ENCODE measurements at regions of chr11 and their contacts with region 1.

Region 1: DNA sequence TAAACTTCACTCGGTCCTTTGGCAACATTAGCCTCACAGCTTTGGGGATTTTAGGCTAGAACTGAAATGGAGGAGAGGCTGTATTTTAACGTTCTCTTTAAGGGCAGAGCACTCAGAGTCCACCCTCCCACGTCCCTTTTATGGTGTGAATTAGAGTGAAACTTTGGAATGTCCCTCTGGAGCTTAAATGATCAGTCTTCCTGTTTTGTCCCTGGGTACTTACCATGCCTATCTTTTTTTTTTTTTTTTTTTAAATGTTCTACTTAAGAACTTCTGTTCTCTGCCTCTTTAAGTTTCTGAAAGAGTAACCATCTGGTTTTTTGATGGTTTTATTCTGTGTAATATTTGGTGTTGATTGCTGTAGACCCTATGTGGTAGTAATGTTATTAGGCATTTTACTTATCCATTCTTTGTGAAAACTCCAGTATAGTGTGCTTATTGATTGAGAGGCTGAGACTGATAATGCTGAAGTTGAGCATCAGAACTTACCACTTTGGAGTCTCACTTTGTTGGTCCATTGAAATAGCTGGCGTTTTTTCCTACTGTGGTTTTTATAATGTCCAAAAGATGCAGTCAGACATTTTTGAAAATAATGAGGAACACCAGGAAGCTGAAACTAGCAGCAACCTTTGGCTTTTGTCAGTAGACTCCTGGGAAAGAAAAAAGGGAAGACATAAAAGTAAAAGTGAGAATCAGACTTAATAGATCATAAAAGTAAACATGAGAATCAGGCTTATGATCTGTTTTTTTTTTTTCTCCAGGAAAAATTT is 11.6 kb downstream of the UVRAG start:
- DNase-seq: peak; percentile 41
- ATAC-seq: no peak
- H3K4me3 ChIP-seq: peak overlapping the region in 1 of 5 experiments; percentile 26
- H3K4me3 Mint-ChIP-seq: peak overlapping the region; percentile 52
- H3K27ac ChIP-seq: peak overlapping the region; percentile 79 to 85
- H3K27ac Mint-ChIP-seq: peak overlapping the region; percentile 92
- H3K4me1 ChIP-seq: peaks cover 76 to 81% of the 10 kb centered on the region in 2 donors
- H3K4me1 Mint-ChIP-seq: peaks cover 80% of the 10 kb centered on the region
- H3K27me3 ChIP-seq: no peaks in the 10 kb centered on the region
- H3K27me3 Mint-ChIP-seq: no peaks in the 10 kb centered on the region
- CTCF ChIP-seq: no peak

Region 2: GRCh38 chr11:75814686-75815344 is 11.8 kb before region 1 on chr11 and contains the start of gene UVRAG:
- CTCF ChIA-PET with region 1: interaction called, 5 read pairs
- POLR2A ChIA-PET with region 1: interaction called, 20 read pairs
- intact Hi-C with region 1: loop called (anchors 1 kb)
- DNase-seq: peak; percentile 100
- ATAC-seq: peak; percentile 84
- H3K4me3 ChIP-seq: peak within 1 kb of the TSS; percentile 80 to 98 (median 95)
- H3K4me3 Mint-ChIP-seq: no peak within 1 kb of the TSS
- H3K27ac ChIP-seq: peak within 1 kb of the TSS; percentile 93 to 97
- H3K27ac Mint-ChIP-seq: peak within 1 kb of the TSS; percentile 99
- H3K4me1 ChIP-seq: peaks cover 37 to 63% of the 10 kb centered on the region in 2 donors
- H3K4me1 Mint-ChIP-seq: peaks cover 48% of the 10 kb centered on the region
- H3K27me3 ChIP-seq: no peaks in the 10 kb centered on the region
- H3K27me3 Mint-ChIP-seq: no peaks in the 10 kb centered on the region
- CTCF ChIP-seq: no peak
- total RNA-seq, gene UVRAG: 94.1 and 115 TPM in 2 replicates

Region 3: DNA sequence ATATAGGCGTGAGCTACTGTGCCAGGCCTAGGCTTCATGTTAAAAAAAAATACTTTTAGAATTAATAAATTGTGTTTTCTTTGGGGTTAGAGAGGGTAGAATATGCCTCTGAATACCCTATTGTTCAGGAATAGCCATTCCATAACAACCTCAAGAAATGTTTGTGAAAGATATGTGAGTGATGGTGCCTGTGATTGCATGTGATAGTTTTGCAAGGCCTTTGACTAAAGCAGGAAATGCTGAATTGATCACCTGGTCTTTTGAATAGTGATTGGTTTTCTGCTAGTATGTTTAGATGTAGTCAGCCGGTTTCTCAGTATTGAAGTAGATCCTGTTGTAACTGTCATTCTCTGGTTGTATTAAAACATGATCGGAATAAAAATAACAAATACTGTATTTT is 61.8 kb after region 1 on chr11:
- CTCF ChIA-PET with region 1: interaction called, 5 read pairs
- POLR2A ChIA-PET with region 1: interaction called, 5 read pairs
- intact Hi-C with region 1: loop called (anchors 1 kb)
- DNase-seq: no peak
- ATAC-seq: no peak
- H3K4me3 ChIP-seq: no peak overlapping the region
- H3K4me3 Mint-ChIP-seq: peak overlapping the region; percentile 9
- H3K27ac ChIP-seq: peak overlapping the region in 1 of 2 donors; percentile 84
- H3K27ac Mint-ChIP-seq: peak overlapping the region; percentile 70
- H3K4me1 ChIP-seq: peaks cover 50 to 73% of the 10 kb centered on the region in 2 donors
- H3K4me1 Mint-ChIP-seq: peaks cover 75% of the 10 kb centered on the region
- H3K27me3 ChIP-seq: no peaks in the 10 kb centered on the region
- H3K27me3 Mint-ChIP-seq: no peaks in the 10 kb centered on the region
- CTCF ChIP-seq: no peak

Measured in B cell (primary cell).